Activated B cell treated with CpG ODN at 0.5 μM for 24 hours (primary cell): ENCODE measurements at regions of chr2 and their contacts with region 1.

Region 1: DNA sequence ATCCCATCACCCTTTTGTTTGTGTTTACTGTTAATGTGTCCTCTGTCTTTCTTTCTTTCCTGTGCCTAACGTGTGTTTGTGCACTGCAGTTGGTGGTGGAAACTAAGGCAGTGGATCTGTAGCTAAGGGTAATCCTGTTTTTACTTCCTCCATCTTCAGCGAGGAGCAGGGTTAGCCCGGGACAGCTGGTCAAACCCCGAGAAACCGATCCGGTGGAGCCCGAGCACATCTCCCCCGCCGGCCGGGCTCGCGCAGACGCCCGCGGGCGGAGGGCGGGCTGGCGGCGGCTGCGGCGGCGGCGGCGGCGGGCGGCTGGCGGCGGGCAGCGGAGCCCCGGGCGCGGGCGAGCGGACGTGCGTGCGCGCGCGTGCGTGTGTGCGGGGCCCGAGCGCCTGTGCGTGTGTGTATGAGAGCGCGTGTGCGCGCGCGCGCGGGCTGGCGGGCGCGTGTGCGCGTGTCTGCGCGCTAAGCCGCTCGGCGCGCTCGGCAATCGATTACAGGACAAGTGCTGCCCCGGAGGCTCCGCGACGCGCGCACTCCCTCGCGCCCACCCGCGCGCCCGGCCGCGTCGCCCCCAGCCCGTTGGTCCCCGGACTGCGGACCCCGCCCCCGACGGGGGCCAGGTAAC is at the start of gene IKZF2:
- DNase-seq: peak; percentile 78
- ATAC-seq: peak; percentile 82
- H3K4me3 Mint-ChIP-seq: peak within 1 kb of the TSS; percentile 92
- H3K27ac Mint-ChIP-seq: peak within 1 kb of the TSS; percentile 89
- H3K4me1 Mint-ChIP-seq: peaks cover 67% of the 10 kb centered on the region
- H3K27me3 Mint-ChIP-seq: no peaks in the 10 kb centered on the region
- CTCF ChIP-seq: no peak
- total RNA-seq, gene IKZF2: 51.5 and 60.2 TPM in 2 replicates

Region 2: GRCh38 chr2:212686285-212686895 is 465.2 kb before region 1 on chr2:
- CTCF ChIA-PET with region 1: interaction called, 8 read pairs
- POLR2A ChIA-PET with region 1: interaction called, 3 read pairs
- intact Hi-C with region 1: loop called (anchors 1 kb)
- DNase-seq: no peak
- ATAC-seq: peak; percentile 45
- H3K4me3 Mint-ChIP-seq: no peak overlapping the region
- H3K27ac Mint-ChIP-seq: no peak overlapping the region
- H3K4me1 Mint-ChIP-seq: no peaks in the 10 kb centered on the region
- H3K27me3 Mint-ChIP-seq: peaks cover 4% of the 10 kb centered on the region
- CTCF ChIP-seq: peak; percentile 81

Region 3: DNA sequence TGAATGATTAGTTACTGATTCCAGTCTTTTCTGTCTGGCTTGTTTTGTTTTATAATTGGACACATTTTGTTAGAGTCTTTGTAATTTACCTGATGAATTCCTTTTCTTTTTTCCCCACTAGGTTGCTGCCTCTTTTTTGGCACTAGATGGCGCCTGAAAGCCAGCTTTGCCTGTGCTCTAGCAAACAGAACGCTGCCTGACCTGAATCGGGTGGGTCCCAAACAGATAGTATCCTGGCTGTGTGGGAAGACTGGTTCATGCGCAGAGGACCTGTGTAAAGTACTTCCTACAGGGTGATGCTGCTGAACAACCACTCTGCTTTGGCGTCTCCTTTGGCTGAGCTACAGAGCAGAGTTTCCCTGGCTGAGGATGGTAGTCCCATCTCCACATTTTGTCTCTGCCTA is 288.4 kb before region 1 on chr2:
- CTCF ChIA-PET with region 1: interaction called, 5 read pairs
- POLR2A ChIA-PET with region 1: no interaction called
- intact Hi-C with region 1: loop called (anchors 1 kb)
- DNase-seq: no peak
- ATAC-seq: no peak
- H3K4me3 Mint-ChIP-seq: no peak overlapping the region
- H3K27ac Mint-ChIP-seq: no peak overlapping the region
- H3K4me1 Mint-ChIP-seq: no peaks in the 10 kb centered on the region
- H3K27me3 Mint-ChIP-seq: no peaks in the 10 kb centered on the region
- CTCF ChIP-seq: no peak

Region 4: GRCh38 chr2:213036836-213037235 is 114.7 kb before region 1 on chr2:
- CTCF ChIA-PET with region 1: interaction called, 3 read pairs
- POLR2A ChIA-PET with region 1: interaction called, 6 read pairs
- intact Hi-C with region 1: loop called (anchors 2 kb)
- DNase-seq: no peak
- ATAC-seq: no peak
- H3K4me3 Mint-ChIP-seq: no peak overlapping the region
- H3K27ac Mint-ChIP-seq: no peak overlapping the region
- H3K4me1 Mint-ChIP-seq: peaks cover 57% of the 10 kb centered on the region
- H3K27me3 Mint-ChIP-seq: no peaks in the 10 kb centered on the region
- CTCF ChIP-seq: no peak

Region 5: DNA sequence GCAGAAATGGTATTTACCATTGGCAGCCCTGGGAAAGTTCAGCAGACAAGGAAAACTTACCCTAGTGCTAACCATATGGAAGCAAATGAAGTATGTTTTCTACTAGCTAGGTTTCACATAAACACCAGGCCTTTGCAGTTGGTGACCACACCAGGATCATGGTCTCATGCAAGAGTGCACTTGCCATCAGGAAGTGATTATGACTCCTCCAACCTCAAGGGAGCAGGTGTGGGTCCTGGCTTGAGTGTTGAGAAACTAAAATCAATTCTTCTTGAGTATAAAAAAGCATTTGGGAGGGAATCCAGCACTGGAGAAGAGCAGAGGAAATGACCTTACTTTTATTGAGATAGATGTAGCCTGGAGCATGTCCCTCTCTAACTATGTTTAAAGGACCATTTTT is 75.9 kb after region 1 on chr2:
- CTCF ChIA-PET with region 1: interaction called, 10 read pairs
- POLR2A ChIA-PET with region 1: interaction called, 52 read pairs
- intact Hi-C with region 1: no loop called
- DNase-seq: no peak
- ATAC-seq: peak; percentile 84
- H3K4me3 Mint-ChIP-seq: peak overlapping the region; percentile 65
- H3K27ac Mint-ChIP-seq: peak overlapping the region; percentile 90
- H3K4me1 Mint-ChIP-seq: peaks cover 60% of the 10 kb centered on the region
- H3K27me3 Mint-ChIP-seq: no peaks in the 10 kb centered on the region
- CTCF ChIP-seq: no peak

Region 6: DNA sequence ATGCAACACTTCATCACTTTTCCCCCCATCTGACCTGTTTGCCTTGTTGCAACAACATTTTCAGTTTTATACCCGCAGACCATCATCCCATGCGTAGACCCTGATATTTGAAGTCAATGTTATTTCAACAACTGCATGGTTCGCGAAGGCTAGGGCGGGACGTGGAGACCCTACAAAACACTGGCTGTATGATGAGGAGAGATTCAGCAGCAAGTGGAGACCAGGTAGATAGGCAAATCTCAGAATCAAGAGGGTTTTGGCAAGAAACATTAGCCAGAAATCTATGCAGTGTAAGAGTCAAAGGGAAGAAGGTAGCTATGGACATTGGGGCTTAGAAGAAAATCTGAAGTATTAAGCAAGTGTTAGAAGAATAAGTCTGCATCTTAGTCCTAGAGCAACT is 90.3 kb after region 1 on chr2:
- CTCF ChIA-PET with region 1: interaction called, 7 read pairs
- POLR2A ChIA-PET with region 1: interaction called, 52 read pairs
- intact Hi-C with region 1: loop called (anchors 1 kb)
- DNase-seq: no peak
- ATAC-seq: no peak
- H3K4me3 Mint-ChIP-seq: no peak overlapping the region
- H3K27ac Mint-ChIP-seq: peak overlapping the region; percentile 62
- H3K4me1 Mint-ChIP-seq: peaks cover 45% of the 10 kb centered on the region
- H3K27me3 Mint-ChIP-seq: peaks cover 3% of the 10 kb centered on the region
- CTCF ChIP-seq: no peak

Region 7: DNA sequence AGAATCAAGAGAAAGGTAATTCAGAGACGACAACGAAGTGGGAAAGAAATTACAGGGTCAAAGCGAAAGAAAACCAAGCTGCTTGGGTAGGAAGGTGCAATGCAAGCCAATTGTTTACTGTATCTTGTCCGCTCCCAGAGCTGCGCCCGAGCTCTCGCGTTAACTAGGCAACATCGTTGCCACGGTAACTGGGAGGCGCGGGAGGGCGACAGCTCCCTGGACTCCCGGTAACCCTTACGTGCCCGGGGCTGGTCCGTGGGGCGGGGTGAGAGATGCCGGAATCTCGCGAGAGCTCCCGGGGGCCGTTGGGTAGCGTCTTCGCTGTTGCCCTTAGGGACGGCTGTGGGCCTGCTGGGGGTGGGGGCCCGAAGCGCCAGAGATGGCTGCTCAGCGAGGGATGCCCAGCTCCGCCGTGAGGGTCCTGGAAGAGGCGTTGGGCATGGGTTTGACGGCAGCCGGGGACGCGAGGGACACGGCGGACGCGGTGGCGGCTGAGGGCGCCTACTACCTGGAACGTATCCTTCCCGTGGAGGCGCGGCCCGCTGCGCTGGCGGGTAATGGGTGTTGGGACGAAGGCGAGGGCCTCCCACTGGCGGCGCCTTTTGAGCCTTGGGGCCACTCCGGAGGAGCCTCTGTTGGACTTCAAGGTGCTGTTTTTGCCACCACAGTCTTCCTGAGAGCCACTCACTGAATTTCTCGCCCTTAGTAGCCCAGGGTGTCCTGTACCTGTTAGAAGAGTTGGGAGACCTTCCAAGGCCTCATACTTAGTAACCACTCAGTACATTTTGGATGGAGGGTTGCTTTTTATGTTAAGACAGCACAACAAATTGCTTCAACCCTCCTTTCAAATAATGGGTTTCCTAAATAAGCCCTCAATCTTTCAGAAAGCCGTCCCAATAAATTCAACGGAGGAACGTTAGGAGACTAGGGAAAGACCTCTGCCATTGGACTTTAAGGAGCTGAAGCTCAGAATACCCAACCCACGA is 132.8 kb after region 1 on chr2 and contains the start of gene SPAG16:
- CTCF ChIA-PET with region 1: interaction called, 3 read pairs
- POLR2A ChIA-PET with region 1: interaction called, 6 read pairs
- intact Hi-C with region 1: loop called (anchors 1 kb)
- DNase-seq: peak; percentile 89
- ATAC-seq: peak; percentile 98
- H3K4me3 Mint-ChIP-seq: peak within 1 kb of the TSS; percentile 96
- H3K27ac Mint-ChIP-seq: peak within 1 kb of the TSS; percentile 87
- H3K4me1 Mint-ChIP-seq: peaks cover 24% of the 10 kb centered on the region
- H3K27me3 Mint-ChIP-seq: no peaks in the 10 kb centered on the region
- CTCF ChIP-seq: no peak
- total RNA-seq, gene SPAG16: 11.2 and 11.5 TPM in 2 replicates